ENCODE measurements at regions of chr9 and their contacts with region 1.

Region 1: DNA sequence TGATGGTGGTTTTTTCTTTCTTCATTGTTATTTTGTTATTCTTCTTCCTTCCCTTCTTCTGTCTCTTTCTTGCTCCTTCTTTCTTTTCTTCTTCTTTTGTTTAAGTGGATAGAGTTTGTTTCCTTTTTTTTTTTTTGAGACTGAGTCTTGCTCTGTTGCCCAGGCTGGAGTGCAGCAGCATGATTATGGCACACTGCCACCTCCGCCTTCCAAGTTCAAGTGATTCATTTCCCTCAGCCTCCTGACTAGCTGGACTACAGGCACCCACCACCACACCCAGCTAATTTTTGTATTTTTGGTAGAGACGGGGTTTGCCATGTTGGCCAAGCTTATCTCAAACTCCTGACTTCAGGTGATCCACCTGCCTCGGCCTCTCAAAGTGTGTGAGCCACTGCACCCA is 40.3 kb downstream of the JAK2 start:
- DNase-seq: peak in 1 of 2 donors; percentile 30
- H3K4me3 ChIP-seq: no peak overlapping the region
- CTCF ChIP-seq: no peak
- POLR2A ChIP-seq: no peak

Region 2: GRCh38 chr9:5062631-5063030 is 37.2 kb after region 1 on chr9:
- intact Hi-C with region 1: no loop called
- DNase-seq: no peak
- H3K4me3 ChIP-seq: no peak overlapping the region
- CTCF ChIP-seq: no peak
- POLR2A ChIP-seq: no peak

Region 3: DNA sequence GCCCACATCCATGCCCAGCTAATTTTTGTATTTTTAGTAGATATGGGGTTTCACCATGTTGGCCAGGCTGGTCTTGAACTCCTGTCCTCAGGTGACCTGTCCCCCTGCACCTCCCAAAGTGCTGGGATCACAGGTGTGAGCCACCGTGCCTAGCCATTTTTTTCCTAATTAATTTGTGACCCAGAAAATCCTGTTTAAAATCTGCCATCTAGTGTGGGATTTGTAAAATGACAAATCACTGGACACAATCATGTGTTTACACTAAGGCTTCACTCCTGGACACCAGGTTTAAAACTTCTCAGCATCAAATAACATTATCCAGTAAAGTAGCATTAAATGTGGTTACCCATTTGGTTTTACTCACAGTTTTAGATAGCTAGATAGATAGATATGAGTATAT is 1713.8 kb after region 1 on chr9:
- intact Hi-C with region 1: loop called (anchors 5 kb)
- DNase-seq: no peak
- H3K4me3 ChIP-seq: no peak overlapping the region
- CTCF ChIP-seq: no peak
- POLR2A ChIP-seq: no peak